GM12878 (cell line): ENCODE measurements at regions of chr13 and their contacts with region 1.

Region 1: DNA sequence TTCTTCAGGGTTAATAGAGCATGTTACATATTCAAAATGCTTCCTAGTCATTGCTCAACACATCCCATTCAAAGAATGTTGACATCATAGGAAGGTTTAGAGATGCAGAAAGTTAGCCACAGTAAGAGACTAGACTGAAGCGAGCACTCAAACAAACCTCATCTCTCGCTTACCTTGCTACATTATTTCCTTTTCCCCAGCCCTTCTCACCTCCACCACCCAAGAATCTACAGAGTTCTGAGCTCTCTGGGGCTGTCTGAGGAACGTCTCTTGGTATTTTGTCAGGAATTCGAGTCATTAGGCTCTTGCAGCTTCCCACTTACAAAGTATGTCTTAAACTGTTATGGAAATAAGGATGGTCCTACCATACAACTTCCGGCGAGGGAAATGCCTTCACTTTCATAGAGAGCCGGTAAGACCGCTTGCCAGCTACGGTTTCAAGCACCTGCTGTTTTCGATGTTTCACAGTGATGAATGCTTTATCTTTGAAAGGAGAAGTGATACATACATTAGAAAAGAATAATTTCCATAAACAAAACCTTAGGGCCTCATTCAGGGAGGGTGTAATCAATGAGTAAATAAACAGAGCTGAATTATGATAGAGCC is 65.1 kb downstream of the FLT1 start:
- DNase-seq: peak; percentile 84
- ATAC-seq: peak; percentile 89
- H3K4me3 ChIP-seq: peak overlapping the region; percentile 58
- H3K27ac ChIP-seq: peak overlapping the region; percentile 96
- H3K4me1 ChIP-seq: peaks cover 18% of the 10 kb centered on the region; the same call in 1 of the 2 replicates
- H3K27me3 ChIP-seq: no peaks in the 10 kb centered on the region
- CTCF ChIP-seq: no peak
- EP300 ChIP-seq: peak; percentile 62 to 87
- POLR2A ChIP-seq: no peak
- RAD21 ChIP-seq: no peak

Region 2: GRCh38 chr13:28324181-28324789 is 105.5 kb before region 1 on chr13:
- CTCF ChIA-PET with region 1: interaction called, 5 read pairs
- POLR2A ChIA-PET with region 1: no interaction called
- RAD21 ChIA-PET with region 1: interaction called, 6 read pairs
- SMC1A ChIA-PET with region 1: interaction called, 4 read pairs
- in situ Hi-C with region 1: no loop called
- intact Hi-C with region 1: loop called (anchors 5 kb)
- DNase-seq: peak; percentile 45
- ATAC-seq: peak; percentile 96
- H3K4me3 ChIP-seq: no peak overlapping the region
- H3K27ac ChIP-seq: no peak overlapping the region
- H3K4me1 ChIP-seq: no peaks in the 10 kb centered on the region
- H3K27me3 ChIP-seq: no peaks in the 10 kb centered on the region
- CTCF ChIP-seq: peak; percentile 77 to 91 (median 85)
- EP300 ChIP-seq: no peak
- POLR2A ChIP-seq: no peak
- RAD21 ChIP-seq: peak; percentile 97

Region 3: GRCh38 chr13:28401303-28402056 is 28.3 kb before region 1 on chr13:
- CTCF ChIA-PET with region 1: interaction called, 6 read pairs
- POLR2A ChIA-PET with region 1: interaction called, 5 read pairs
- RAD21 ChIA-PET with region 1: interaction called, 3 read pairs
- SMC1A ChIA-PET with region 1: interaction called, 5 read pairs
- in situ Hi-C with region 1: no loop called
- intact Hi-C with region 1: loop called (anchors 1 kb)
- DNase-seq: peak; percentile 62
- ATAC-seq: peak; percentile 80
- H3K4me3 ChIP-seq: no peak overlapping the region
- H3K27ac ChIP-seq: peak overlapping the region; percentile 59
- H3K4me1 ChIP-seq: peaks cover 9% of the 10 kb centered on the region
- H3K27me3 ChIP-seq: no peaks in the 10 kb centered on the region
- CTCF ChIP-seq: peak in 2 of 3 experiments; percentile 13 to 20; a peak in 2 of 6 replicates
- EP300 ChIP-seq: no peak
- POLR2A ChIP-seq: no peak
- RAD21 ChIP-seq: peak; percentile 52; the same call in 1 of the 2 replicates

Region 4: GRCh38 chr13:28408863-28409262 is 20.9 kb before region 1 on chr13:
- CTCF ChIA-PET with region 1: interaction called, 3 read pairs
- POLR2A ChIA-PET with region 1: no interaction called
- RAD21 ChIA-PET with region 1: interaction called, 5 read pairs
- SMC1A ChIA-PET with region 1: interaction called, 10 read pairs
- in situ Hi-C with region 1: no loop called
- intact Hi-C with region 1: no loop called
- DNase-seq: no peak
- ATAC-seq: no peak
- H3K4me3 ChIP-seq: no peak overlapping the region
- H3K27ac ChIP-seq: no peak overlapping the region; the same call in 1 of the 2 replicates
- H3K4me1 ChIP-seq: peaks cover 28% of the 10 kb centered on the region
- H3K27me3 ChIP-seq: no peaks in the 10 kb centered on the region
- CTCF ChIP-seq: no peak
- EP300 ChIP-seq: no peak
- POLR2A ChIP-seq: no peak
- RAD21 ChIP-seq: no peak

Region 5: DNA sequence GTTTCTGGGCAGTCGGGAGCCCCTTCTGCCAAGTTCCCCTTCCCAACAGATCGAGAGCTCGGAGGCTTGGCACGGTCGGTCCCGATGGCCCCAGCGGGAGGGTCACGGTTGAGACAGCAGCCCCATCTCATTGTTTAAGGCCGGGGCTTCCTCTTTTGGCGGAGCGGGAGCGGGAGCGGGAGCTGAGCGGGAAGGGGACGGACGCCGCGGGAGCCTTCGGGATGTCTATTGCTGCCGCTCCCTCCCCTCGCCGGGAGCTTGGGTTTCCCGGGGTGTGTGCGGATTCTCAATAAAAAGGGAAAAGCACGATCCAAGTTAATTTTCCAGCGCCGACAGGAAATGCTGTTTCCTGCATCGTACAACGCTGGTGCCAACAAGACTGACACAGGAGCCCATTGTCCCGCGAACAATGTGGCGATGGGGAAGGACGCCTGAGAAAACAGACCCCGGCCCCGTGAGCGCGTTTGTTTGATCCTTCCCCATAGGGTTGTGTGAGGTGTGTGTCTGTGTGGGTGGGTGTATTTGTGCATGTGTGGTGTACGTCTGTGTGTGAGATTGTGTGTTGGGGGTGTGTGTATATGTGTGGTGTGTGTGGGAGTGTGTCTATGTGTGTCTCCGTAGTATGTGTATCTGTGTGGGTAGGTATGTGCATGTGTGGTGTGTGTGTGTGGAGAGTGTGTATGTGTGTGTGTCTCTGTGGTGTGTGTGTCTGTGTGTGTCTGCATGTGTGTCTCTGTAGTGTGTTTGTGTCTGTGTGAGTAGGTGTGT is 101.5 kb after region 1 on chr13:
- CTCF ChIA-PET with region 1: interaction called, 3 read pairs
- POLR2A ChIA-PET with region 1: interaction called, 4 read pairs
- RAD21 ChIA-PET with region 1: interaction called, 7 read pairs
- SMC1A ChIA-PET with region 1: interaction called, 10 read pairs
- in situ Hi-C with region 1: no loop called
- intact Hi-C with region 1: no loop called
- DNase-seq: no peak
- ATAC-seq: peak; percentile 13
- H3K4me3 ChIP-seq: peak overlapping the region; percentile 42; the same call in 1 of the 2 replicates
- H3K27ac ChIP-seq: no peak overlapping the region
- H3K4me1 ChIP-seq: peaks cover 13% of the 10 kb centered on the region
- H3K27me3 ChIP-seq: peaks cover 10 to 18% of the 10 kb centered on the region in 2 experiments
- CTCF ChIP-seq: no peak
- EP300 ChIP-seq: no peak
- POLR2A ChIP-seq: no peak
- RAD21 ChIP-seq: no peak

Region 6: GRCh38 chr13:28658796-28659620 is 229.2 kb after region 1 on chr13 and contains the start of gene POMP:
- CTCF ChIA-PET with region 1: interaction called, 4 read pairs
- POLR2A ChIA-PET with region 1: interaction called, 3 read pairs
- RAD21 ChIA-PET with region 1: interaction called, 6 read pairs
- SMC1A ChIA-PET with region 1: interaction called, 7 read pairs
- in situ Hi-C with region 1: no loop called
- intact Hi-C with region 1: loop called (anchors 2 kb)
- DNase-seq: peak; percentile 82
- ATAC-seq: peak; percentile 85
- H3K4me3 ChIP-seq: peak within 1 kb of the TSS; percentile 80
- H3K27ac ChIP-seq: peak within 1 kb of the TSS; percentile 99
- H3K4me1 ChIP-seq: 0 out of 2 replicates have a peak, but pooled peaks cover 4% of the 10 kb centered on the region
- H3K27me3 ChIP-seq: no peaks in the 10 kb centered on the region
- CTCF ChIP-seq: no peak
- EP300 ChIP-seq: peak in 1 of 2 experiments; percentile 63; a peak in 2 of 4 replicates
- POLR2A ChIP-seq: peak; percentile 99
- RAD21 ChIP-seq: 0 out of 2 replicates have a peak, but pooled peaks have one; percentile 4
- polyA plus RNA-seq, gene POMP: 655 to 668 TPM